ENCODE measurements at regions of chr16 and their contacts with region 1.

Region 1: DNA sequence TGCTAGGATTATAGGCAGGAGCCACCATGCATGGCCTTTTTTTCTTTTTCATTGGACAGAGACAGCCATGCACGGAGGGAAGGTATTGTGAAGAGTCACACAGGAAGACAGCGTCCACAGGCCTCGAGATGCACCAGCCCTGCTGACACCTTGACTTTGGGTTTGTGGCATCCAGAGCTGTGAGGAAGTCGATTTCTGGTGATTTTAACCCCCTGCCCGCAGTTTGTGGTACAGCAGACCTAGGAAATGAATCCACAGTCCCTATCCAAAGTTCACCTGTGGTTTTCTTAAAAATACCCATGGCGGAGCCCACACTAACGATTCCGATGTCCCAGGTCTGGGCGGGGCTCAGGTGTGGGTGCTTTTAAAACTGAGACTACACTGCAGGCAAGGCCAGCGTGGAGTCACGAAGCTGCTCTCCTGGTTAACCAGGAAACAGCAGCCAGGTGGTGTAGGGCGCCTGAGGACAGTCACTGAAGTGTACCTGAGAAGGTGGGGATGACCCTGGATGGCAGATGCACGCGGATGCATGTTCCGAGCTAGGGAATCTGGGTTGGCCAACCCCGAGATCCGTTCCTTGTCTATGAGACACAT is 14.4 kb upstream of the MEAK7 start:
- DNase-seq: peak; percentile 89
- H3K4me3 Mint-ChIP-seq: peak overlapping the region; percentile 37
- H3K27ac Mint-ChIP-seq: peak overlapping the region; percentile 82
- H3K4me1 Mint-ChIP-seq: peaks cover 67% of the 10 kb centered on the region
- H3K27me3 Mint-ChIP-seq: no peaks in the 10 kb centered on the region

Region 2: DNA sequence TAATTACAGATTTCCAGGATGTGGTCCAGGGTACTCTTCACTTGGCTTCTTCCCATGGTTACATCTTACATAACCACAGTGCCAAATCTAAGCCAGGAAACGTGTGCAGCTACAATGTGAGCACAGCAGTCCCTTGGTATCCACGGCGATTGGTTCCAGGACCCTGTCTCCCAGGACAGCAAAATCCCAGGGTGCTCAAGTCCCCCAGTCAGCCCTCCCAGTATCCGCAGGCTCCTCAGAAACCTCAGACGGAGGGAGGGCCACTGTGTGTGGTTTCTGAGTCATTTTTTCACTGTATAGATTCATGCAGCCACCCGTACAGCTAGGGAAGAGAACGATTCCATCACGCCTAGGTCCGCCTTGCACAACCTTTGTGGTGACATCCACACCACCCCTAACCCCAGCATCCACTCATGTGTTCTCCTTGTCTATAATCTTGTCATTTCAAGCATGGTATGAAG is 161.6 kb before region 1 on chr16:
- CTCF ChIA-PET with region 1: no interaction called
- POLR2A ChIA-PET with region 1: no interaction called
- DNase-seq: peak; percentile 50
- H3K4me3 Mint-ChIP-seq: no peak overlapping the region
- H3K27ac Mint-ChIP-seq: no peak overlapping the region
- H3K4me1 Mint-ChIP-seq: peaks cover 36% of the 10 kb centered on the region
- H3K27me3 Mint-ChIP-seq: peaks cover 9% of the 10 kb centered on the region

Region 3: DNA sequence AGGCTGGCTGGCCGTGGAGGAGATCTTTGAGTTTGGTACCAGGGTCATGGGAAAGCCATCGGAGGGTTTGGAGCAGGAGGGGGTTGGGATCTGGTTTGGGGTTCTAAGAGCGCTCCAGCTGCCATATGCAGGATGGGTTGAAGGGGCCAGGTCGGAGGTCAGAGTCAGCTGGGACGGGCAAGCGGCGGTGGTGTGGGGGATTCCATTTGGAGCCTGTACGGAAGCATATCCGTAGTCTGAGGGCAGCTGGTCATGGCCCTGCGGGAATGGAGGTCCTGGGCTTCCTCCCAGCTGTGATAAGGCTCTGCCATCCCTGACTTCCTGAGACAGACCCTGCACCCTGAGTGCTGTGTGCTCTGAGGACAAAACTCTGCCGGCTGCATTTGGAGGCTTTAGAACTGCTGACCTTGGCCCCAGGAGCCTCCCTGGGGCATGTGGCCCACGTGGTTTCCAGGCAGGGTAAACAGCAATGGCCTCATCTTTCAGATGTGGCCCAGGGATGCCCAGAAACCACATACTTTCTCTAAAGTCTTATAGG is 104.0 kb before region 1 on chr16:
- CTCF ChIA-PET with region 1: no interaction called
- POLR2A ChIA-PET with region 1: no interaction called
- DNase-seq: no peak
- H3K4me3 Mint-ChIP-seq: no peak overlapping the region
- H3K27ac Mint-ChIP-seq: no peak overlapping the region
- H3K4me1 Mint-ChIP-seq: no peaks in the 10 kb centered on the region
- H3K27me3 Mint-ChIP-seq: peaks cover 6% of the 10 kb centered on the region

Region 4: GRCh38 chr16:84532291-84532724 is 13.5 kb after region 1 on chr16:
- CTCF ChIA-PET with region 1: interaction called, 7 read pairs
- POLR2A ChIA-PET with region 1: interaction called, 19 read pairs
- DNase-seq: no peak
- H3K4me3 Mint-ChIP-seq: no peak overlapping the region
- H3K27ac Mint-ChIP-seq: no peak overlapping the region
- H3K4me1 Mint-ChIP-seq: peaks cover 26% of the 10 kb centered on the region
- H3K27me3 Mint-ChIP-seq: no peaks in the 10 kb centered on the region

Region 5: DNA sequence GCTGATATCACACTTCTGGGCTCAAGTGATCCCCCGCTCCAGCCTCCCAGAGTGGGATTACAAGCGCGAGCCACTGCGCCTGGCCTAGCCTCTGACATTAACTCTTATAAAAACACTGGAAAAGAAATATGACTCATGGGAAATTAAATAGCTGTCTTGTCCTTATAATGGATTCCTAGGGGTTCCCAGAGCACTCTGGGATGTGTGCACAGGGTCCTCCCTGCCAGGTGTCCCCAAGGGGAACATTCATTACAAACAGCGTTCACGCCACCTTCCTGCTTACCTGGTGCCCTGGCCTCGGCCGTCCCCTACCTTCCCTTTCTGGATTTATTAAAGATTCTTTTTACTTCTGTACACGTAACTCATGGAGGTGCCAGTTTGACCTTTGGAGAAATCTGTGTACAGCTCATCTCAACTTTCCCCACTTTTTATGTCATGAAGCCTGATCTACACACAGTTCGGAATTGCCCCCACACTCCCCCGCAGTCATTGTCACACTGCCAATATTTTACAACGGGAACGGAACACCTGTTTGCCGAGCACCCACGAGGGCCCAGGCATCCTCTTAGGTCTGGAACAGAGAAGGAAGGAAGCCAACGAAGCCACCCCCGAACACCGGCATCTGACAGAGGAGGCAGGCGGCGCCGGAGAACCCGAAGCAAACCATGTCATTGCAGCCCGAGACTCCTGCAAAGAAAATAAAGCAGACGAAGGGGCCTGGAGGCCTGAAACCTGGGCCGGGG is 25.4 kb after region 1 on chr16:
- CTCF ChIA-PET with region 1: interaction called, 20 read pairs
- POLR2A ChIA-PET with region 1: interaction called, 31 read pairs
- DNase-seq: no peak
- H3K4me3 Mint-ChIP-seq: no peak overlapping the region
- H3K27ac Mint-ChIP-seq: no peak overlapping the region
- H3K4me1 Mint-ChIP-seq: peaks cover 36% of the 10 kb centered on the region
- H3K27me3 Mint-ChIP-seq: no peaks in the 10 kb centered on the region

Region 6: GRCh38 chr16:84593825-84594724 is 75.2 kb after region 1 on chr16:
- CTCF ChIA-PET with region 1: interaction called, 4 read pairs
- POLR2A ChIA-PET with region 1: interaction called, 120 read pairs
- DNase-seq: peak; percentile 91
- H3K4me3 Mint-ChIP-seq: peak overlapping the region; percentile 81
- H3K27ac Mint-ChIP-seq: peak overlapping the region; percentile 96
- H3K4me1 Mint-ChIP-seq: peaks cover 82% of the 10 kb centered on the region
- H3K27me3 Mint-ChIP-seq: no peaks in the 10 kb centered on the region

Region 7: DNA sequence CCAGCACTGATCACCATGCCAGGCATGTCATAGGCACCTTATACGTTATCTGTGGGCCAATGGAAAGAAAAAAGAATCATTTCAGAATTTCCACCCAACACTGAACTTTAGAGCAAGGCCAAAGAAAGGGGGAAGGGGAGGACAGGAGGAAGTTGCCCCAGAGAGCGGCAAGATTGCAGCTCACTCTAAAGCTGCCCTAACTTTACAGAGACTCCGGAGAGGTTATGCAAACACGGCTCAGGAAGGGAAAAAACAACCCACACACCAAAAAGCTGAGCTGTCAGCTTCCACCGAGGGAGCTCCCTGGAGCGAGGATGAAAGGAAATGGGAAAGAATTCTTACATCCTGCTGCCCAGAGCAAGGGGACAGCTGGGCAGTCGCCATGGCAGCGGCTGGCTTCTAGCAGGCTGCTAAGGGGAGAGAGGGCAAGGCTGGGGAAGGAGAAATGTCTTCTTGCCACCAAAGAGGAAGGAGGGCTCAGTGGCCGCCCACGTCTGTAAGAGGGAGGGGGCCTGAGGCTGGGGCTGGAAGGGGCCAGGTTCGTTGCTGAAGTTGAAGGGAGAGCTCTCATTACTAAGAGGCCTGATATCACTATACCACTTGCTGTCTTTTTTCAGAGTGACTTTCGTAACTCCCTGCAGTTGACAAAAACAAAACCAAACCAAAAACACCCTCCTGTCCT is 80.8 kb after region 1 on chr16:
- CTCF ChIA-PET with region 1: interaction called, 3 read pairs
- POLR2A ChIA-PET with region 1: interaction called, 120 read pairs
- DNase-seq: peak; percentile 59
- H3K4me3 Mint-ChIP-seq: peak overlapping the region; percentile 73
- H3K27ac Mint-ChIP-seq: peak overlapping the region; percentile 96
- H3K4me1 Mint-ChIP-seq: peaks cover 93% of the 10 kb centered on the region
- H3K27me3 Mint-ChIP-seq: no peaks in the 10 kb centered on the region